ENCODE measurements at regions of chr6 and their contacts with region 1.

Region 1: DNA sequence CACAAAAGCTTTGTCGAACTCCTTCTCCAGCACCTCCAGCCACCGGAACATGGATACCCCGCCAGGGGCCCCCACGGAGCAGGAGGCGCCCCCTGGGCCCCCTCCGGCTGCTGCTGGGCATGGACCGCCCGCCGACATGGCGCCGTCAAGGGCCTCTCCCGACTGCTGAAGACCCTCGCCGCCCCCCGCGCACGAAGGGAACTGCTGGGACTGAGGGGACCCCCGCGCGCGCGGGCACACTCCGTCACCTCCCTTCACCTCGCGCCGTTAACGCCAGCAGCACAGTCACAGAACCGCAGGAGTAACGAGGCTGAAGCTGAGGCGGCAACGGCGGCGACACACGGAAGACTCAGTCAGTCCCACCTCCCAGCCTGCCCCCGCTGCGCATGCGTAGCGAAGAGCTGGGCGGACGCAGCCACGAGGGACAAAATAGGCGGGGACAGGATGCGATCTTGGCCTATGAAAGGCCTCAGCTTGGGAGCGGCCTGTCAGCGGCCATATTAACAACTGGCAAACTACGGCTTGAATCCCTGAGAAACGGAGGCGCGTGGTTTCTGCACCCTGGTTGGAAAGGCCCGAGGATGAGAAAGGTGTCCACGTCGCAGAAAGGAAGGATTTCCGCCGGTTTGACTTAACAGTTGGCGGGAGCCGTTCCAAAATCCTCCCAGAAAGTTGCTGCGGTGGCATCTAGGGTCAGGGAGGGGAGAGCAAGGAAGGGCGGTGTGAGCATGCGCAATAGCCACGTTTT is at the start of gene GOPC:
- DNase-seq: peak; percentile 87 to 97 (median 96)
- ATAC-seq: peak; percentile 97
- H3K4me3 ChIP-seq: peak within 1 kb of the TSS; percentile 93
- H3K4me3 Mint-ChIP-seq: peak within 1 kb of the TSS; percentile 96 to 100 (median 99)
- H3K27ac ChIP-seq: peak within 1 kb of the TSS; percentile 92
- H3K27ac Mint-ChIP-seq: peak within 1 kb of the TSS; percentile 94 to 99 (median 99)
- H3K4me1 ChIP-seq: peaks cover 0 to 9% of the 10 kb centered on the region in 2 donors
- H3K4me1 Mint-ChIP-seq: peaks cover 24 to 58% (median 49%) of the 10 kb centered on the region in 7 donors
- H3K27me3 ChIP-seq: no peaks in the 10 kb centered on the region
- H3K27me3 Mint-ChIP-seq: peaks cover 0 to 5% (median 4%) of the 10 kb centered on the region in 5 donors
- total RNA-seq, gene GOPC: 16.2 to 39.4 (median 26.5) TPM

Region 2: DNA sequence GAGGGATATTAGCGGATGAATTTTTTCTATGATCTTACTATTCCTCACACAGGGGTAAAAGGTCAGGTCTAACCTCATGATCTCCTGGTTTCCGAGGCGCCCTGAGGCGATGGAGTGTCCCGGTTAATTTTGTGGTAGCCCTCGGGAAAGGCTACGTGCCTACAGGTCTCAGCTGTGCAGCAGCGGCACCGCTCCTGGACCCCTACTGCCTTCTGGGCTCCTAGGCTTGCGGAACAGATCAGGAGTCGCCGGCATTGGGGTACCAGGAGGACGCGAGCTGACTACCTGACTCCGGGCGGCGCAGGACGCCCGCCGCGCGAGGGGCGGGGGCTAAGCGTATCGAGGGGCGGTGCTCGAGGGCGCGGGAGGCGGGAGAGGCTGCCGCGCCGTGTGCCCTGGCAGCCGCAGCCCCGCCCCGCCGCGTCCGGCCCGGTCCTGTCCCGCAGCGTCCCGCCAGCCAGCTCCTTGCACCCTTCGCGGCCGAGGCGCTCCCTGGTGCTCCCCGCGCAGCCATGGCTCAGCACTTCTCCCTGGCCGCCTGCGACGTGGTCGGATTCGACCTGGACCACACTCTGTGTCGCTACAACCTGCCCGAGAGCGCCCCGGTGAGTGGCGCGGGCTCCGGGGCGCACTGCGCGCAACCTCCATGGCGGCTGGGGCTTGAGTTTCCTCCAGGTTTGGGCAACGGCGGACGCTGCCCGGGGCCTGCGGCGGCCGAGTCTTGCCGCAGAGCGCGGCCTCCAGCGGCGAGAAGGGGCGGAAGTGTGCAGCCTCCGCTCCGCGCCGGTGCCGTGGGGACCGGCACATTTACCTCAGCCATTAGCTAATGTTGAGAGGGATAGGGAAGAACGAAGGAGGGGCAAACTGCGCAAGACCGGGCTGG is 1501.7 kb before region 1 on chr6 and contains the start of gene NT5DC1:
- CTCF ChIA-PET with region 1: no interaction called
- POLR2A ChIA-PET with region 1: no interaction called
- intact Hi-C with region 1: loop called (anchors 5 to 10 kb)
- DNase-seq: peak; percentile 76 to 90 (median 82)
- ATAC-seq: peak; percentile 94
- H3K4me3 ChIP-seq: peak within 1 kb of the TSS; percentile 77
- H3K4me3 Mint-ChIP-seq: peak within 1 kb of the TSS; percentile 89 to 99 (median 96)
- H3K27ac ChIP-seq: peak within 1 kb of the TSS; percentile 79
- H3K27ac Mint-ChIP-seq: peak within 1 kb of the TSS; percentile 85 to 96 (median 92)
- H3K4me1 ChIP-seq: peaks cover 25 to 32% of the 10 kb centered on the region in 2 donors
- H3K4me1 Mint-ChIP-seq: peaks cover 32 to 64% (median 57%) of the 10 kb centered on the region in 7 donors
- H3K27me3 ChIP-seq: no peaks in the 10 kb centered on the region
- H3K27me3 Mint-ChIP-seq: no peaks in the 10 kb centered on the region
- total RNA-seq, gene NT5DC1: 30.5 to 52.6 (median 39.7) TPM

Region 3: GRCh38 chr6:116615937-116616736 is 986.2 kb before region 1 on chr6 and contains the start of gene RSPH4A:
- CTCF ChIA-PET with region 1: no interaction called
- POLR2A ChIA-PET with region 1: no interaction called
- intact Hi-C with region 1: loop called in 1 of 2 experiments (anchors 5 kb)
- DNase-seq: peak; percentile 17 to 76 (median 61)
- ATAC-seq: peak; percentile 95
- H3K4me3 ChIP-seq: peak within 1 kb of the TSS; percentile 78
- H3K4me3 Mint-ChIP-seq: peak within 1 kb of the TSS; percentile 81 to 94 (median 86)
- H3K27ac ChIP-seq: peak within 1 kb of the TSS; percentile 28
- H3K27ac Mint-ChIP-seq: peak within 1 kb of the TSS in 8 of 9 donors; percentile 4 to 78 (median 38)
- H3K4me1 ChIP-seq: peaks cover 5 to 6% of the 10 kb centered on the region in 2 donors
- H3K4me1 Mint-ChIP-seq: peaks cover 6 to 22% (median 16%) of the 10 kb centered on the region in 7 donors
- H3K27me3 ChIP-seq: no peaks in the 10 kb centered on the region
- H3K27me3 Mint-ChIP-seq: peaks cover 0 to 54% (median 14%) of the 10 kb centered on the region in 5 donors
- total RNA-seq, gene RSPH4A: 0.53 to 1.3 (median 0.73) TPM

Region 4: DNA sequence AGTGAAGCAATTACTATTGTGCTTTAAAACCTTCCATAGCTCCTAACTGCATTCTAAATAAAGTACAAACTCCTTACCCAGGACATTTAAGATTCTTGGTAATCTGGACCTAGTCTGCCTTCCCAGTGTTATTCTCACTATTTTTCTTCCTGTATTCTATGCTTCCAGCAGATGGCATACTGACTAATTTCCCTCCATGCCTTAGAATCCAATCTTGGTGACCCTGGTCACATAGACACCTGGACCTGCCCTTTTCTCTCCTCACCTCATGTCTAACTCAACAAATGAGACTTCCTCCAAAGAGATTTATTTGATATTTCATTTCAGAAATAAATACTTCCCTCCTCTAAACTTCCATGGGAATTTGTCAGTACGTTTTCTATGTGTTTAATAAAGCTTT is 202.4 kb before region 1 on chr6:
- CTCF ChIA-PET with region 1: no interaction called
- POLR2A ChIA-PET with region 1: no interaction called
- intact Hi-C with region 1: loop called in 1 of 2 experiments (anchors 1 kb)
- DNase-seq: no peak
- ATAC-seq: no peak
- H3K4me3 ChIP-seq: no peak overlapping the region
- H3K4me3 Mint-ChIP-seq: no peak overlapping the region
- H3K27ac ChIP-seq: no peak overlapping the region
- H3K27ac Mint-ChIP-seq: no peak overlapping the region
- H3K4me1 ChIP-seq: no peaks in the 10 kb centered on the region
- H3K4me1 Mint-ChIP-seq: no peaks in the 10 kb centered on the region
- H3K27me3 ChIP-seq: no peaks in the 10 kb centered on the region
- H3K27me3 Mint-ChIP-seq: peaks cover 0 to 2% (median 0%) of the 10 kb centered on the region in 5 donors

Region 5: DNA sequence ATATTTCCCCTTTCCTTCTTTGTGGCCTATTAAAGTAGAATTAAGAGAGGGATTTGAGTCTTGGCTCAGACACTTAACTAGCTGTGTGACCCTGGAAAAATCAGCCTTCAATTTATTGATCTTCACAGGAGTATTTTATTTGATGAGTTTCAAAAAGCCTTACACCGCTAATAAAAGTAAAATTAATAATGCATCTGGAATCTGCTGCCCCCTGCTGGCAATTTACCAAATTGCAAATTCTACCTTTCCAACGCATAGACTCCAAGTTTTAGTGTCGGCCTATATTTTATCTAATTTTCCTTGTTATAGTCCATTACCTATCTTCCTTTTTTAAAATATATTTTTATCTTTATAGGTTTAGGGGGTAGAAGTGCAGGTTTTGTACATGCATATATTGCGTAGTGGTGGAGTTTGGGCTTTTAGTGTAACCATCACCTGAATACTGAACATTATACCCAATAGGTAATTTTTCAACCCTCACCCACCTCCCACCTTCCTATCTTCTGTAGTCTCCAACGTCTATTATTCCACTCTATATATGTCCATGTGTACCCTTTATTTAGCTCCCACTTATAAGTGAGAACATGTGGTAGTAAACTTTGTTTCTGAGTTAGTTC is 46.3 kb before region 1 on chr6:
- CTCF ChIA-PET with region 1: interaction called, 4 read pairs
- POLR2A ChIA-PET with region 1: interaction called, 27 read pairs
- intact Hi-C with region 1: loop called (anchors 1 kb)
- DNase-seq: peak; percentile 20 to 62 (median 46)
- ATAC-seq: peak; percentile 60
- H3K4me3 ChIP-seq: no peak overlapping the region
- H3K4me3 Mint-ChIP-seq: no peak overlapping the region
- H3K27ac ChIP-seq: no peak overlapping the region
- H3K27ac Mint-ChIP-seq: no peak overlapping the region
- H3K4me1 ChIP-seq: peaks cover 0 to under 1% of the 10 kb centered on the region in 2 donors
- H3K4me1 Mint-ChIP-seq: peaks cover under 1 to 3% (median 2%) of the 10 kb centered on the region in 7 donors
- H3K27me3 ChIP-seq: no peaks in the 10 kb centered on the region
- H3K27me3 Mint-ChIP-seq: peaks cover 0 to 2% (median 0%) of the 10 kb centered on the region in 5 donors

Region 6: GRCh38 chr6:118709859-118710350 is 1107.6 kb after region 1 on chr6:
- CTCF ChIA-PET with region 1: no interaction called
- POLR2A ChIA-PET with region 1: interaction called, 3 read pairs
- intact Hi-C with region 1: loop called (anchors 1 to 5 kb)
- DNase-seq: peak; percentile 25 to 87 (median 83)
- ATAC-seq: peak; percentile 93
- H3K4me3 ChIP-seq: peak overlapping the region; percentile 91
- H3K4me3 Mint-ChIP-seq: peak overlapping the region; percentile 95 to 100 (median 97)
- H3K27ac ChIP-seq: peak overlapping the region; percentile 76
- H3K27ac Mint-ChIP-seq: peak overlapping the region; percentile 94 to 99 (median 97)
- H3K4me1 ChIP-seq: peaks cover 48 to 49% of the 10 kb centered on the region in 2 donors
- H3K4me1 Mint-ChIP-seq: peaks cover 47 to 81% (median 74%) of the 10 kb centered on the region in 7 donors
- H3K27me3 ChIP-seq: no peaks in the 10 kb centered on the region
- H3K27me3 Mint-ChIP-seq: no peaks in the 10 kb centered on the region

Measured in naive thymus-derived CD4-positive, alpha-beta T cell (primary cell).